ENCODE measurements at regions of chr16 and their contacts with region 1.

Region 1: DNA sequence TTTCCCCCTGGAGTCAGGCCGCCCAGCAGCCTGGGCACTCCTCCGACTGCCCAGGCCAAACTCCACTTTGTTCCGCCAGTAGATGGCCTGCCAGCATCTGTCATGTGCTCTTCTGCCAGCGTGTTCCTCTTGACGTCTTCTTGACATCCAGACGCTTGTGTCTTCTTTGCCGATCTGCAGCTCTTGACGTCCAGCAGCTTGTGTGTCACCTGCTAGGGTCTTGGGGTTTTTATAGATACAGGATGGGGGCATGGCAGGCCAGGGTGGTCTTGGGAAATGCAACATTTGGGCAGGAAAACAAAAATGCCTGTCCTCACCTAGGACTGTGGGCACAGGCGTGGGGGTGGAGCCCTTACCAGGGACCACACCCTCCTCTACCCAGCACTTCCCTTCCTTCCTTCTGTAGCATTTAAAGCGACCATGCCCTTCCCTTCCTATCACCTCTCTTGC is 88.7 kb downstream of the BMERB1 start:
- DNase-seq: no peak
- H3K4me3 ChIP-seq: no peak overlapping the region
- H3K27ac ChIP-seq: no peak overlapping the region
- H3K4me1 ChIP-seq: no peaks in the 10 kb centered on the region; a peak in 1 of 7 replicates
- H3K27me3 ChIP-seq: no peaks in the 10 kb centered on the region
- CTCF ChIP-seq: peak; percentile 35 to 41 (median 36)
- EP300 ChIP-seq: no peak
- POLR2A ChIP-seq: no peak
- RAD21 ChIP-seq: peak; percentile 30 to 62; a peak in 3 of 4 replicates

Region 2: GRCh38 chr16:15509593-15510535 is 13.3 kb before region 1 on chr16:
- CTCF ChIA-PET with region 1: interaction called, 10 read pairs
- POLR2A ChIA-PET with region 1: no interaction called
- DNase-seq: peak; percentile 39 to 52
- H3K4me3 ChIP-seq: peak overlapping the region in 1 of 4 experiments; percentile 7; a peak in 3 of 8 replicates
- H3K27ac ChIP-seq: peak overlapping the region; percentile 22; the same call in 1 of the 2 replicates
- H3K4me1 ChIP-seq: peaks cover 8 to 16% (median 13%) of the 10 kb centered on the region in 4 experiments; a peak in 6 of 7 replicates
- H3K27me3 ChIP-seq: no peaks in the 10 kb centered on the region
- CTCF ChIP-seq: peak in 1 of 3 experiments; percentile 1; a peak in 1 of 4 replicates
- EP300 ChIP-seq: no peak
- POLR2A ChIP-seq: no peak
- RAD21 ChIP-seq: peak; percentile 24 to 34; a peak in 2 of 4 replicates